ENCODE measurements at regions of chr1 and their contacts with region 1.

Region 1: DNA sequence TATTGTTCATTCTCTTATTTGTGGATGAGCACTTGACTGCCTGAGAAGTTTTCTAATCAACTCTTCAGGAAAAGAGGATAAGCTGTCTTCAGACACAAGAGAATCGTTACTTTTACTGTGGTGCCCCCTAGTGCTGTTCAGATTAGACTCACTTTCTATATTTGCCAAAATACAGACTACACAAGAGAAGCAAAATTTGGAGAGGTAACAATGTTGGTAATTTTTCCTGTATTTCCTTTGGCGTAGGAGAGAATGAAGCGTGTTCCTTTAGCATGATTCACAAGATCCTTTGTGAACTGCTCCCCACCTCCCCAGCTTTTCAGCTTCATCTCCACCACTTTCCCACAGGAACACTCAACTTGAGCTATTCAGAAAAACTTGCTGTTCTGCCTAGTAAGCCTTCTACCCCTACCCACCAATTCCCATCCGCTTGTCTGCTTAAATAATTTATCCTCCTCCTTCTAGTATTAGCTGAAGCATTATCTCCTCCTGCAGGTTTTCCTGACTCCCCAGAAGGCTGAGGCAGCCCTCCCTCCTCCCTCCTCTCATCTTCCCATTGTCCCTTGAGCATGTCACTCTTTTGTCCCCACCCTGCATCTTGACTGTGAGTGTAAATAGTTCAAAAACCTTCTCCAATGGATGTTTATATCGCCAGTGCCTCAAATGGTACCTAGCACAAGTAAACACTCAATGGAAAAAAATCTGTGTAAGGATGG is 4.5 kb downstream of the TNFSF4 start:
- DNase-seq: peak; percentile 83
- H3K4me3 Mint-ChIP-seq: no peak overlapping the region
- H3K27ac Mint-ChIP-seq: no peak overlapping the region
- H3K4me1 Mint-ChIP-seq: peaks cover 25% of the 10 kb centered on the region
- H3K27me3 Mint-ChIP-seq: no peaks in the 10 kb centered on the region
- CTCF ChIP-seq: peak; percentile 92

Region 2: GRCh38 chr1:172826096-172826743 is 376.4 kb before region 1 on chr1:
- CTCF ChIA-PET with region 1: interaction called, 591 read pairs
- POLR2A ChIA-PET with region 1: interaction called, 66 read pairs
- intact Hi-C with region 1: loop called (anchors 1 kb)
- DNase-seq: peak; percentile 87
- H3K4me3 Mint-ChIP-seq: no peak overlapping the region
- H3K27ac Mint-ChIP-seq: no peak overlapping the region
- H3K4me1 Mint-ChIP-seq: peaks cover 7% of the 10 kb centered on the region
- H3K27me3 Mint-ChIP-seq: no peaks in the 10 kb centered on the region
- CTCF ChIP-seq: peak; percentile 86

Region 3: DNA sequence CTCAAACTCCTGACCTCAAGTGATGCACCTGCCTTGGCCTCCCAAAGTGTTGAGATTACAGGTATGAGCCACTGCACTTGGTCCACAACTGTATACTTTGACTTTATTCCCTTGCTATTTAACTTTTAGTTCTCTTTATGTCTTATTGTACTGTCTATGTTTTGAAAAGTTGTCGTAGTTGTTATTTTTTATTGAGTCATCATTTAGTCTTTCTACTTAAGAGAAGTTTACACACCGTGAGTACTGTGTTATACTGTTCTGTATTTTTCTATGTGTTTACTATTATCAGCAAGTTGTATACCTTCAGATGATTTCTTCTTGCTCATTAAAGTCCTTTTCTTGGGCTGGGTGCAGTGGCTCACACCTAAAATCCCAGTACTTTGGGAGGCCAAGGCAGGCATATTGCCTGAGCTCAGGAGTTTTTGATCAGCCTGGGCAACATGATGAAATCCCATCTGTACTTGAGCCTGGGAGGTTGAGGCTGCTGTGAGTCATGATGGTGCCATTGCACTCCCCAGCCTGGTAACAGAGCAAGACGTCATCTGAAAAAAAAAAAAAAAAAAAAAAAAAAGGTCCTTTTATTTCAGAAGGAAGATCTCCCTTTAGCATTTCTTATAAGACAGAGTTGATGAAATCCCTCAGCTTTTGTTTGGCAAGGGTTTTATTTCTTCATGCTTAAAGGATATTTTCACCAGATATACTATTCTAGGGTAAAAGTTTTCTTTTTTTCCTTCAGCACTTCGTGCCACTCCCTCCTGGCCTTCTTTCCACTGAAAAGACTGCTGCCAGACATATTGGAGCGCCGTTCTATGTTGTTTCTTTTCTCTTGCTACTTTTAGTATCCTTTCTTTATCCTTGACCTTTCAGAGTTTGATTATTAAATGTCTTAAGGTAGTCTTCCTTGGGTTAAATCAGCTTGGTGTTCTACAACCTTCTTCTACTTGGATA is 199.4 kb before region 1 on chr1:
- CTCF ChIA-PET with region 1: interaction called, 4 read pairs
- POLR2A ChIA-PET with region 1: no interaction called
- intact Hi-C with region 1: loop called (anchors 1 kb)
- DNase-seq: peak; percentile 95
- H3K4me3 Mint-ChIP-seq: no peak overlapping the region
- H3K27ac Mint-ChIP-seq: peak overlapping the region; percentile 36
- H3K4me1 Mint-ChIP-seq: peaks cover 16% of the 10 kb centered on the region
- H3K27me3 Mint-ChIP-seq: no peaks in the 10 kb centered on the region
- CTCF ChIP-seq: no peak

Region 4: DNA sequence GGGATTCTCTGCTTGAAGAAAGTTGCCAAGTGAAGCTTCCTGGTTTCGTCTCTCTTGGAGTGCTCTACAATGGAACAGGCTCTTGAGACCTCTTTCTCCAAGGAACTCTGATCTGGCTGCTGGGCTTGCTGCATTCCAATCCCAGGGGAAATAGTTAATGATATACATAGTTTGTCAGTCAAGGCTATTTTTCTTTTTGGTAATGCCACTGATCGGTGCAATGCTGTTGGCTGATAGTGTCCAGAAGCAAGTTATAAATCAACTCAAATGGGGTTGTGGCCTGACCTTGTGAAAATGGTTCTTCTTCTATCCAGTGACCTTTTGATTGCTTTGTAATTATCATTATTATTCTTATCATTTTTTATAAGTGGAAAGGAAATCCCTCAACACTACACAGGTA is 103.4 kb before region 1 on chr1:
- CTCF ChIA-PET with region 1: no interaction called
- POLR2A ChIA-PET with region 1: no interaction called
- intact Hi-C with region 1: no loop called
- DNase-seq: no peak
- H3K4me3 Mint-ChIP-seq: no peak overlapping the region
- H3K27ac Mint-ChIP-seq: no peak overlapping the region
- H3K4me1 Mint-ChIP-seq: peaks cover 12% of the 10 kb centered on the region
- H3K27me3 Mint-ChIP-seq: no peaks in the 10 kb centered on the region
- CTCF ChIP-seq: no peak

Region 5: DNA sequence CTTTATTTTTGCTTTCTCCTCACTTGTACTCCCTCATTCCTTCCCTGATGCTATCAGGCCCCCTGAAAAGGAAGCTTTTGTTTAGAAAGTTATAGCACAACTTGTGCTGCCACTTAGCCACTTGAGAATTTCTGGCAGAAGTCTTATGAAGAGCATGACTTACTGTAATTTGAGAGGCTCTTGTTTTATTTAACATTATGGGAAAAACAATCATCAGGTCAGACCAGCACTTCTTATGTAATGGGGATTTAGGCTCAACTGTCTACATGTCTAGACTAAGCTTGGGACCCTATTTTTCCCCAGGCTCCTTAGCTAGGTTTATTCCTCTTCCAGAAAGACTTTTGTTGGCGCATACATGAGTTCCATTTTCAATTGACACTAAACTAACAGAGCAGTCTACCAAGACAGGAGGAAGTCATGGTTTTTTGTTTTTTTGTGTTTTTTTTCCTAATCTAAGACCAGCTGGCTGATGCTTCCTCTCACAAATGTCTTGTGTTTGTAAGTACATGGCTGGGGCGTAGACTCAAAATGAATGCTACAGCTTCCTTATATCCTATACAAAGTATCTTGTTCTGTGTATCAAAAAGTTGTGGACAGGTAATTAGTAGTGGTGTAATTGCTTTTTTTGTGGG is 27.0 kb before region 1 on chr1:
- CTCF ChIA-PET with region 1: interaction called, 16 read pairs
- POLR2A ChIA-PET with region 1: no interaction called
- intact Hi-C with region 1: no loop called
- DNase-seq: peak; percentile 11
- H3K4me3 Mint-ChIP-seq: no peak overlapping the region
- H3K27ac Mint-ChIP-seq: peak overlapping the region; percentile 11
- H3K4me1 Mint-ChIP-seq: no peaks in the 10 kb centered on the region
- H3K27me3 Mint-ChIP-seq: no peaks in the 10 kb centered on the region
- CTCF ChIP-seq: no peak

Region 6: GRCh38 chr1:173224280-173224892 is 21.8 kb after region 1 on chr1:
- CTCF ChIA-PET with region 1: interaction called, 26 read pairs
- POLR2A ChIA-PET with region 1: no interaction called
- intact Hi-C with region 1: no loop called
- DNase-seq: no peak
- H3K4me3 Mint-ChIP-seq: no peak overlapping the region
- H3K27ac Mint-ChIP-seq: no peak overlapping the region
- H3K4me1 Mint-ChIP-seq: no peaks in the 10 kb centered on the region
- H3K27me3 Mint-ChIP-seq: no peaks in the 10 kb centered on the region
- CTCF ChIP-seq: no peak